Dendritic cell treated with granulocyte-macrophage colony-stimulating factor and Interleukin-4, amounts not matched to agents 40 ng/mL and 50 ng/mL, for 4 days (primary cell): ENCODE measurements at regions of chr4 and their contacts with region 1.

Region 1: DNA sequence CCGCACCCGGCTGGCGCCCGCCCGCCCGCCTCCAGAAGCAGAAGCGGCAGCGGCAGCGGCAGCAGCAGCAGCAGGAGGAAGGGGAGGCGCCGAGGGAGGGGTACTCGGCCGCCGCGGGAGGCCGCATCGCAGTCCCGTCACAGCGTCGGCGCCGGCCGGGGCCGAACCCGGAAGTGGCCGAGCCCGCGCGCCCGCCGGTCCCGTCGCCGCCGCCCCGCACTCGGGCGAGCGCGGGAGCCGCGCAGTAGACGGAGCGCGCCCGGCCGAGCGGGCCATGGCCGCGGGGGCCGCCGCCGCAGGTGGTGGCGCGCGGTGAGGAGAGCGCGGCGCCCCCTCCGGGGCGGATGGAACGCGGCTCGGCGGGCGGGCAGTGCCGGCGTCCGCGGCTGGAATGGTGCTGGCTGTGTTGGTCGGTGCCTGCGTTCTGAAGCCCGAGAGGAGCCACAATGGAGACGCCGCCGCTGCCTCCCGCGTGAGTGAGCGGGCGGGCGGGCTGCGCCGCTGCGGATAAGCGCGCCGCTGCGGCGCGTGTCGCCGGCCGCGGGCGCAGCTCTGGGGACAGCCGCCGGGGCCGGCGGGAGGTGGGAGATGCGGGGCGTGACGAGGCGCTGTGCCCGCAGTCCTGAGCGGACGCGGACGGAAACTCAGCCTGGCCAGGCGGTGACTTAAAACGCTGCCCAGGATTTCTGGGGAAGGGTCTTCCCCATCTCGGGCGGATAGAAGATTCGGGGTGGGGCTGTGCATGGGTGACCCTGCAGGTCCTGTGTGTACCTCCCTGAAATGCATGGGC is at the start of gene KLHL2:
- H3K4me3 Mint-ChIP-seq: peak within 1 kb of the TSS; percentile 79
- H3K27ac Mint-ChIP-seq: peak within 1 kb of the TSS; percentile 69
- H3K4me1 Mint-ChIP-seq: peaks cover 61% of the 10 kb centered on the region
- H3K27me3 Mint-ChIP-seq: no peaks in the 10 kb centered on the region

Region 2: DNA sequence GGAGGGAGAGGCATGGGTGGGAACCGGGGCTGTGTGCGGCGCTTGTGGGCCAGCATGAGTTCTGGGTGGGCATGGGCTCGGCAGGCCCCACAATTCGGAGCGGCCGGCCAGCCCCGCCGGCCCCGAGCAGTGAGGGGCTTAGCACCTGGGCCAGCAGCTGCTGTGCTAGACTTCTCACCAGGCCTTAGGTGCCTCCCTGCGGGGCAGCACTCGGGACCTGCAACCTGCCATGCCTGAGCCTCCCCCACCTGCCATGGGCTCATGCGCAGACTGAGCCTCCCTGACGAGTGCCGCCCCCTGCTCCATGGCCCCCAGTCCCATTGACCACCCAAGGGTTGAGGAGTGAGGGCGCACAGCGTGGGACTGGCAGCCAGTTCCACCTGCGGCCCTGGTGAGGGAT is 1139.2 kb before region 1 on chr4:
- intact Hi-C with region 1: no loop called
- H3K4me3 Mint-ChIP-seq: no peak overlapping the region
- H3K27ac Mint-ChIP-seq: no peak overlapping the region
- H3K4me1 Mint-ChIP-seq: no peaks in the 10 kb centered on the region
- H3K27me3 Mint-ChIP-seq: no peaks in the 10 kb centered on the region

Region 3: GRCh38 chr4:165167650-165168049 is 40.0 kb before region 1 on chr4:
- intact Hi-C with region 1: no loop called
- H3K4me3 Mint-ChIP-seq: no peak overlapping the region
- H3K27ac Mint-ChIP-seq: no peak overlapping the region
- H3K4me1 Mint-ChIP-seq: no peaks in the 10 kb centered on the region
- H3K27me3 Mint-ChIP-seq: no peaks in the 10 kb centered on the region

Region 4: DNA sequence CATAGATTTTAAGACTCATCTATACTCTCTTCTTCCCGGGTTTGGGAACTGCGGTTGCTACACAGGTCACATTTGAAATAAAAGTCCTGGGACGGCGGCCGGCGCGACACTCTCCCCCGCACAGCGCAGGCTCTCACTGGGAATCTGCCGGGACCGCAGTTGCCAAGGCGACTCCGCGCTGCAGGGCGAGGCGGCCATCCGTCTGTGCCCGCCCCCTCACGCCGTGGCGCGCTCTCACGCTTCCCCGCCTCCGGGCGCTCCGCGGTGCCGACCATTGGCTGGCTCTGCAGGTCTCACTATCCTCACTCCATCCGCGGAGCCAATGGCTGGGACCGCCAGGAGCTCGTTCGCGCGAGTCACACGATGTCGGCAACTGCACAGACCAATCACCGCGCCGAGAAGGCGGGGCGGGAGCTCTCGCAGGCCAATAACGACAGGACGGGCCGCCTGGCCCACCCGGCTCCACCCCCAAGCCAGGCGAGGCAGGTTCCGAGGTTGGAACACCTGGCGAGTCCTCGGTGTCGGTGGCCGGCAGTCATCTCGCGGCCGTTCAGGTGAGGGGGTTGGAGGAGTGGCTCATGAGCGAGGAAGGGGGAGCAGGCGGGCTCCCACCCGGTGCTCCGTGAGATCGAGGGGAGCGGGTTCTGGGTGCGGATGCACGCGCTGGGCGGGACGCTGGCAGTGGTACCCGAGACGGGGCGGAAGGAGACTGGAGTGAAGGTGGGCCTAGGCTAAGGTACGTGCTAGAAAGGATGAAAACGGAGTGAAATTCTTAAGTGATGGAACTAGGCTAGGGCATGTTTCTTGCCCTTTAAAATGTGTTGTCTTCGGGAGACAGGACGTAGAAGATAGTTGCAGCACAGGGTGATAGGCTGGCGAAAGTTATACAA is 119.8 kb after region 1 on chr4 and contains the start of gene MSMO1:
- intact Hi-C with region 1: loop called (anchors 2 kb)
- H3K4me3 Mint-ChIP-seq: no peak within 1 kb of the TSS
- H3K27ac Mint-ChIP-seq: no peak within 1 kb of the TSS
- H3K4me1 Mint-ChIP-seq: peaks cover 44% of the 10 kb centered on the region
- H3K27me3 Mint-ChIP-seq: no peaks in the 10 kb centered on the region